ENCODE measurements at regions of chr6 and their contacts with region 1.

Region 1: DNA sequence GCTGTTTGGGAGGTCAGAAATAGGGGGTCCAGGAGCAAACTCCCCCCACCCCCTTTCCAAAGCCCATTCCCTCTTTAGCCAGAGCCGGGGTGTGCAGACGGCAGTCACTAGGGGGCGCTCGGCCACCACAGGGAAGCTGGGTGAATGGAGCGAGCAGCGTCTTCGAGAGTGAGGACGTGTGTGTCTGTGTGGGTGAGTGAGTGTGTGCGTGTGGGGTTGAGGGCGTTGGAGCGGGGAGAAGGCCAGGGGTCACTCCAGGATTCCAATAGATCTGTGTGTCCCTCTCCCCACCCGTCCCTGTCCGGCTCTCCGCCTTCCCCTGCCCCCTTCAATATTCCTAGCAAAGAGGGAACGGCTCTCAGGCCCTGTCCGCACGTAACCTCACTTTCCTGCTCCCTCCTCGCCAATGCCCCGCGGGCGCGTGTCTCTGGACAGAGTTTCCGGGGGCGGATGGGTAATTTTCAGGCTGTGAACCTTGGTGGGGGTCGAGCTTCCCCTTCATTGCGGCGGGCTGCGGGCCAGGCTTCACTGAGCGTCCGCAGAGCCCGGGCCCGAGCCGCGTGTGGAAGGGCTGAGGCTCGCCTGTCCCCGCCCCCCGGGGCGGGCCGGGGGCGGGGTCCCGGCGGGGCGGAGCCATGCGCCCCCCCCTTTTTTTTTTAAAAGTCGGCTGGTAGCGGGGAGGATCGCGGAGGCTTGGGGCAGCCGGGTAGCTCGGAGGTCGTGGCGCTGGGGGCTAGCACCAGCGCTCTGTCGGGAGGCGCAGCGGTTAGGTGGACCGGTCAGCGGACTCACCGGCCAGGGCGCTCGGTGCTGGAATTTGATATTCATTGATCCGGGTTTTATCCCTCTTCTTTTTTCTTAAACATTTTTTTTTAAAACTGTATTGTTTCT is at the start of gene VEGFA:
- DNase-seq: peak; percentile 97
- H3K4me3 Mint-ChIP-seq: peak within 1 kb of the TSS; percentile 92
- H3K27ac Mint-ChIP-seq: peak within 1 kb of the TSS; percentile 80
- H3K4me1 Mint-ChIP-seq: peaks cover 25% of the 10 kb centered on the region
- H3K27me3 Mint-ChIP-seq: peaks cover 3% of the 10 kb centered on the region
- total RNA-seq, gene VEGFA: 62.9 and 64.6 TPM in 2 replicates

Region 2: GRCh38 chr6:43667245-43668150 is 102.3 kb before region 1 on chr6:
- intact Hi-C with region 1: loop called (anchors 1 kb)
- DNase-seq: peak; percentile 95
- H3K4me3 Mint-ChIP-seq: peak overlapping the region; percentile 52
- H3K27ac Mint-ChIP-seq: peak overlapping the region; percentile 76
- H3K4me1 Mint-ChIP-seq: peaks cover 45% of the 10 kb centered on the region
- H3K27me3 Mint-ChIP-seq: no peaks in the 10 kb centered on the region

Region 3: GRCh38 chr6:43723737-43724295 is 46.0 kb before region 1 on chr6:
- intact Hi-C with region 1: loop called (anchors 2 kb)
- DNase-seq: peak; percentile 89
- H3K4me3 Mint-ChIP-seq: no peak overlapping the region
- H3K27ac Mint-ChIP-seq: no peak overlapping the region
- H3K4me1 Mint-ChIP-seq: peaks cover 22% of the 10 kb centered on the region
- H3K27me3 Mint-ChIP-seq: peaks cover 5% of the 10 kb centered on the region

Region 4: GRCh38 chr6:43838276-43839036 is 68.7 kb after region 1 on chr6:
- intact Hi-C with region 1: loop called (anchors 2 kb)
- DNase-seq: peak; percentile 64
- H3K4me3 Mint-ChIP-seq: no peak overlapping the region
- H3K27ac Mint-ChIP-seq: no peak overlapping the region
- H3K4me1 Mint-ChIP-seq: no peaks in the 10 kb centered on the region
- H3K27me3 Mint-ChIP-seq: peaks cover 5% of the 10 kb centered on the region

Region 5: DNA sequence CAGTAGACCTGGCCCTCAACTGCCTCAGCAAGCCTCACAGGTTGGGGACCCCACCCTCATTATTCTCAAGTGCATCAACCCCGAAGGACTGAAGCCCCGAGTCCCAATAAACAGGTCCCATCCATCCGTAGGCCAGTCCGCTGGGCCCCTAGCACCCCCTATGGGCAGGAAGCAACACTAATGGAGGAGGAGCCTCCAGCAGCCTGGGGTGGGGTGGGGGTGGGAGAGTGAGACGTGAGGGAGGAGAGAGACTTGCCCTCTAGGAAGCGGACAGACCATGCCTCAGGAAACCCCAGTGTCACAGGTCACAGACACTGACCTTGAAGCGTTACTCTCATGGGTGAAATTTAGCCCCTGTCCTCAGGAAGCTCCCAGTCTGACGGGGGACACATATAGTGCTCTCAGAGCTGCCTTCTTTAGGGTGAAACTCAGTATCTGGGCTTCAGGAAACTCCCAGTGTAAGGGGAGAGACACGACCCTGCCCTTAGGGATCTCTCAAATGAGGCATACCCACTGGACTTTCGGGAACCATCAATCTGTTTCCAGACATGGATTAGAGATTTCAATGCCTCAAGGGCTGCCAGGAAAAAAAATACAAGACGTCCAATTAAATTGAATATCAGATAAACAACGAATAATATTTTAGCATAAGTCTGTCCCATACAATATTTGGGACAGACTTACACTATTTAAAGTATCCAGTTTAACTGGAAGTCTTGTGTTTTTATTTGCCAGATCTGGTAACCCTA is 231.7 kb after region 1 on chr6:
- intact Hi-C with region 1: loop called (anchors 2 kb)
- DNase-seq: peak; percentile 67
- H3K4me3 Mint-ChIP-seq: peak overlapping the region; percentile 62
- H3K27ac Mint-ChIP-seq: peak overlapping the region; percentile 37
- H3K4me1 Mint-ChIP-seq: peaks cover 4% of the 10 kb centered on the region
- H3K27me3 Mint-ChIP-seq: peaks cover 27% of the 10 kb centered on the region

Region 6: GRCh38 chr6:44246663-44247337 is 477.0 kb after region 1 on chr6 and contains the start of gene HSP90AB1:
- intact Hi-C with region 1: loop called (anchors 2 kb)
- DNase-seq: peak; percentile 99
- H3K4me3 Mint-ChIP-seq: peak within 1 kb of the TSS; percentile 92
- H3K27ac Mint-ChIP-seq: peak within 1 kb of the TSS; percentile 98
- H3K4me1 Mint-ChIP-seq: peaks cover 40% of the 10 kb centered on the region
- H3K27me3 Mint-ChIP-seq: peaks cover 3% of the 10 kb centered on the region
- total RNA-seq, gene HSP90AB1: 2,450 and 2,479 TPM in 2 replicates

Measured in activated CD4-positive, alpha-beta T cell treated with anti-CD3 and anti-CD28 coated beads, Interleukin-2, amount 10 ng/mL, durations not matched to agents 24 days and 14 days (primary cell).